Esophagus muscularis mucosa (tissue), 4 donors: ENCODE measurements at regions of chr4 and their contacts with region 1.

Region 1: GRCh38 chr4:24736066-24736465 is 59.3 kb upstream of the SOD3 start:
- DNase-seq: no peak
- H3K4me3 ChIP-seq: no peak overlapping the region
- H3K27ac ChIP-seq: no peak overlapping the region
- H3K4me1 ChIP-seq: peaks cover 8 to 27% (median 24%) of the 10 kb centered on the region in 4 donors
- H3K27me3 ChIP-seq: no peaks in the 10 kb centered on the region
- CTCF ChIP-seq: peak in 1 of 3 experiments; percentile 29
- EP300 ChIP-seq: no peak
- POLR2A ChIP-seq: no peak

Region 2: GRCh38 chr4:24363751-24364150 is 372.3 kb before region 1 on chr4:
- intact Hi-C with region 1: no loop called
- DNase-seq: no peak
- H3K4me3 ChIP-seq: no peak overlapping the region
- H3K27ac ChIP-seq: peak overlapping the region in 1 of 4 donors; percentile 7
- H3K4me1 ChIP-seq: peaks cover 0 to 17% (median 17%) of the 10 kb centered on the region in 4 donors
- H3K27me3 ChIP-seq: no peaks in the 10 kb centered on the region
- CTCF ChIP-seq: no peak
- EP300 ChIP-seq: no peak
- POLR2A ChIP-seq: no peak

Region 3: DNA sequence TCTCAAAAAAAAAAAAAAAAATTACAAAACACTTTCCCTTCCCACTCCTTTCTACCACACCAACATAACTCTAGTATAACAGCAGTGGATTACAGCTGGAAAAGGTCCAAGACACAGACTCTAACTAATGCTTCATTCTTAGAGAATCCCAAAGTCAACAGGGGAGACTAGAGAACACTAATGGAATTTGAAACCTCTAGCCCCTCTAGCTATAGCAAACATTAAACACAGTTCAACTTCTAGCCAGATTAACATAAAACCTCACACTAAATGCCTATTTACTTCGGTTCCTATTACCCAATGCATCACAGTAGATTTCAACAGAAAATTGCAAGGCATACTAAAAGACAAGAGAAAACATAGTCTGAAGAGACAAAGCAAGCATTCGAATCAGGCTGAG is 141.2 kb before region 1 on chr4:
- intact Hi-C with region 1: no loop called
- DNase-seq: no peak
- H3K4me3 ChIP-seq: no peak overlapping the region
- H3K27ac ChIP-seq: no peak overlapping the region
- H3K4me1 ChIP-seq: no peaks in the 10 kb centered on the region
- H3K27me3 ChIP-seq: no peaks in the 10 kb centered on the region
- CTCF ChIP-seq: no peak
- EP300 ChIP-seq: no peak
- POLR2A ChIP-seq: no peak

Region 4: GRCh38 chr4:24778464-24779225 is 42.6 kb after region 1 on chr4:
- intact Hi-C with region 1: loop called (anchors 5 kb)
- DNase-seq: peak; percentile 92
- H3K4me3 ChIP-seq: no peak overlapping the region
- H3K27ac ChIP-seq: peak overlapping the region; percentile 61 to 69 (median 65)
- H3K4me1 ChIP-seq: peaks cover 29 to 62% (median 62%) of the 10 kb centered on the region in 4 donors
- H3K27me3 ChIP-seq: no peaks in the 10 kb centered on the region
- CTCF ChIP-seq: no peak
- EP300 ChIP-seq: no peak
- POLR2A ChIP-seq: no peak

Region 5: DNA sequence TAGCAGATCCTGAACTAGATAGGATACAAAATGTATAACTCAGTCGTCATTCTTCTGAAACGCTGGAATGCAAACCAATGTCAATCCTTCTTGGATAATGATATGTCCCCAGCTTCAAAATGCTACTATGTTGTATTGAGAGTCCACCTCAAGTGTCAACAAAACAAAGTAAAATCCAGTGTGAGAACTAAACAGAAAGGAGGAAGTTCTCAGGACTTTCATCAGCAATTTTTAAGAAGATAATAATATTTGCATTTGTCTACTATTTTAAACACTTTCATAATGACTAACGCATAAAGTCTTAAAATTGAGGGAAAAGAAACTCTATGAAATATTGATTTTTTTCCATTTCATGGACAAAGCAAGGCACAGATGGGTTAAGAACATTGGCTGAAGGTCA is 95.6 kb after region 1 on chr4:
- intact Hi-C with region 1: no loop called
- DNase-seq: no peak
- H3K4me3 ChIP-seq: no peak overlapping the region
- H3K27ac ChIP-seq: no peak overlapping the region
- H3K4me1 ChIP-seq: peaks cover 0 to 15% (median 12%) of the 10 kb centered on the region in 4 donors
- H3K27me3 ChIP-seq: no peaks in the 10 kb centered on the region
- CTCF ChIP-seq: no peak
- EP300 ChIP-seq: no peak
- POLR2A ChIP-seq: no peak

Region 6: DNA sequence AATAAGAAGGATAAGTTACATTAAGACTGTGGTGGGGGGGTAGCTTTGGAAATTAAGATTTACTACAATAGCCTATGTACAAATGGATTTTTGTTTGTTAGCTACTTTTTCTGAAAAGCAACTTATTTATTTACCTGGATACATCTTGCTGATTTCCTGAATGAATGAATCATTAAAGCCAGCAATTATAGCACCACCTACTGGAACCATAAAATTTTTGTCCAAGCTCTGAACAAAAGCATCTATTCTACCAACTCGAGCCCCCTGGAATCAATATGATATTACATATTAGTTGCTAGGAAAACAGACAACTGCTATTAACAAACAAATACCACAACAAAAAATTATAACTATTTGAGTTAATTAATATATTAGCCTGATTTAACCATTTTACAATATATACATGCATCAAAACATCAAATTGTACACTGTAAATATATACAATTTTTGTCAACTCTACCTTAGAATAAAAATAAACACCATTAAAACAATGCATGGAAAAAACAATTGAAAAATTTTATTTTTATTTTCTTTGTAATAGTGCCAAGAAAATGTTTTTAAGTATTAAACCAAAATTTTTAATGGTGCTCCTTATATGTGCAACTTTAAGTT is 408.9 kb after region 1 on chr4:
- intact Hi-C with region 1: no loop called
- DNase-seq: no peak
- H3K4me3 ChIP-seq: no peak overlapping the region
- H3K27ac ChIP-seq: no peak overlapping the region
- H3K4me1 ChIP-seq: no peaks in the 10 kb centered on the region
- H3K27me3 ChIP-seq: no peaks in the 10 kb centered on the region
- CTCF ChIP-seq: peak; percentile 45 to 61 (median 46)
- EP300 ChIP-seq: no peak
- POLR2A ChIP-seq: no peak